Sigmoid colon (tissue), 7 donors: ENCODE measurements at regions of chr7 and their contacts with region 1.

Region 1: DNA sequence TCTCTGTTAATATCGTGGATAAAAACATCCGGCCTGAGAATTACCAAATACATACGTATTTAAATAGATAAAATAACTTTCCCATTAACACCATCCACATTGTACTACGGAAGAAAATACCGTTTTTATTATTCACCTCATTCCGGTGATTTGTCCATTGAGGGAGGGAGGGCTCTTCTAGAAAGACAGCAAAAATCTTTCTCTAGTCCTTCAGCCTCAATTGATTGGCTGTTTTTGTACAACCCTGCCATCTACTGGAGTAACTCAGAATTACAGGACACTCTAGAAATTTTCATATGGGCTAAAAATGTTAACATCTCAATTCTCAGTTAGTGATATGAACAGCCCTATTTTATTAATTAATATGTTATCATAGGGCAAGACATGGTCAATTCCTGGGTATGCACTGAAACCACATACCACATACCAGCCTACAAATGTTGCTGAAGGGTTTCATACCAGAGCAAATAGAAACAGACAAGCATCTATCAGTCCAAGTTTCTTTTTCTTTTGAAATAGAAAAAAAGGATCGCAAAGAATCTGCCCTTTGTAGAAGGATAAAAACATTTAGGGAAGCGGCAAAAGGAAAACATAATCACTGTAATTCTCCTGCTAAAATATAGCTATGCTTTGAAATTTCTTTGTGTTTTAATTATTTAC is 55.8 kb upstream of the CDCA7L start:
- DNase-seq: no peak
- H3K4me3 ChIP-seq: no peak overlapping the region
- H3K27ac ChIP-seq: peak overlapping the region in 1 of 4 donors; percentile 5
- H3K4me1 ChIP-seq: peaks cover 0 to 9% (median 0%) of the 10 kb centered on the region in 4 donors
- H3K27me3 ChIP-seq: no peaks in the 10 kb centered on the region
- CTCF ChIP-seq: peak; percentile 42 to 81 (median 76)
- EP300 ChIP-seq: no peak
- POLR2A ChIP-seq: no peak

Region 2: GRCh38 chr7:21507626-21508343 is 493.7 kb before region 1 on chr7:
- intact Hi-C with region 1: loop called (anchors 10 kb)
- DNase-seq: peak; percentile 57
- H3K4me3 ChIP-seq: no peak overlapping the region
- H3K27ac ChIP-seq: no peak overlapping the region
- H3K4me1 ChIP-seq: no peaks in the 10 kb centered on the region
- H3K27me3 ChIP-seq: no peaks in the 10 kb centered on the region
- CTCF ChIP-seq: peak; percentile 48 to 76 (median 66)
- EP300 ChIP-seq: no peak
- POLR2A ChIP-seq: no peak

Region 3: DNA sequence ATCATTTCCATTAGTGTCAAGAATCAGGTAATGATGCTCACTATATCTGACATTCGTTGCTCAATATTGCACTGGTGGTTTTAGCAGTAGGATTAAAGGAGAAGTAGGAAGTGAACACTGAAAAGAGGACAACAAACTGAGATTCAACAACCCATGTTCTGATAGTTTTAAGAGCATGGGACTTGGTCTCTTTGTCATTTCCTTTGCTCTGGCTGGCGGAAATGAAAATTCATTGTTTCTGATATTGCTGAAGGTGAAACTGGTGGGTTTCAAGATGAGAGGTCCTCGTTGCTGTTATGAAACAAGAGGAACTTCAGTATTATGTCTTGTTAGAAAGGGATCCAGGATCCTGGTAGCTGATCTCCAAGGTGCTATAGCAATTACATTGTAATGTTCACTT is 329.6 kb before region 1 on chr7:
- intact Hi-C with region 1: no loop called
- DNase-seq: no peak
- H3K4me3 ChIP-seq: no peak overlapping the region
- H3K27ac ChIP-seq: no peak overlapping the region
- H3K4me1 ChIP-seq: no peaks in the 10 kb centered on the region
- H3K27me3 ChIP-seq: no peaks in the 10 kb centered on the region
- CTCF ChIP-seq: no peak
- EP300 ChIP-seq: no peak
- POLR2A ChIP-seq: no peak

Region 4: GRCh38 chr7:21771906-21772610 is 229.4 kb before region 1 on chr7:
- intact Hi-C with region 1: loop called (anchors 10 kb)
- DNase-seq: no peak
- H3K4me3 ChIP-seq: peak overlapping the region in 1 of 4 donors; percentile 0
- H3K27ac ChIP-seq: peak overlapping the region in 3 of 4 donors; percentile 10 to 36 (median 16)
- H3K4me1 ChIP-seq: peaks cover 0 to 35% (median 29%) of the 10 kb centered on the region in 4 donors
- H3K27me3 ChIP-seq: no peaks in the 10 kb centered on the region
- CTCF ChIP-seq: no peak
- EP300 ChIP-seq: no peak
- POLR2A ChIP-seq: no peak

Region 5: DNA sequence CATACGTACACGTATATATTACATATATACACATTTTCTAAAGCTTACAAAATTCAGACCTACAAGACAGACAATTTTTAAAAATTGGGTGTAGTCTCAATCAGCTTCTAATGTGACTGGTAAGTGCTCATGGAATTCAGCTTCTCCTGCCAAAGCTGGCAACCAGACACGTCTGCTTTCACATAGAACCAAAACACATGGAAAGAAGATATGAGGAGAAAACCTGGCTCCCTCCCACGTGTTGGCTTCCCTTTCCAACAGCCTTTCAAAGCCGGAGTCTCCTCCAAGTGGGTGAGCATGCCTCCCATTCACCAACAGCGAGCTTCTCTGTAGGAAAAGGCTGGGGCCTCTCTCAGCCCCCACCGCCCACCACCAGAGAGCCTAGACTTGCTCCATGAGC is 89.2 kb before region 1 on chr7:
- intact Hi-C with region 1: loop called (anchors 10 kb)
- DNase-seq: no peak
- H3K4me3 ChIP-seq: no peak overlapping the region
- H3K27ac ChIP-seq: peak overlapping the region in 1 of 4 donors; percentile 37
- H3K4me1 ChIP-seq: peaks cover 0 to 32% (median 23%) of the 10 kb centered on the region in 4 donors
- H3K27me3 ChIP-seq: no peaks in the 10 kb centered on the region
- CTCF ChIP-seq: no peak
- EP300 ChIP-seq: no peak
- POLR2A ChIP-seq: no peak

Region 6: DNA sequence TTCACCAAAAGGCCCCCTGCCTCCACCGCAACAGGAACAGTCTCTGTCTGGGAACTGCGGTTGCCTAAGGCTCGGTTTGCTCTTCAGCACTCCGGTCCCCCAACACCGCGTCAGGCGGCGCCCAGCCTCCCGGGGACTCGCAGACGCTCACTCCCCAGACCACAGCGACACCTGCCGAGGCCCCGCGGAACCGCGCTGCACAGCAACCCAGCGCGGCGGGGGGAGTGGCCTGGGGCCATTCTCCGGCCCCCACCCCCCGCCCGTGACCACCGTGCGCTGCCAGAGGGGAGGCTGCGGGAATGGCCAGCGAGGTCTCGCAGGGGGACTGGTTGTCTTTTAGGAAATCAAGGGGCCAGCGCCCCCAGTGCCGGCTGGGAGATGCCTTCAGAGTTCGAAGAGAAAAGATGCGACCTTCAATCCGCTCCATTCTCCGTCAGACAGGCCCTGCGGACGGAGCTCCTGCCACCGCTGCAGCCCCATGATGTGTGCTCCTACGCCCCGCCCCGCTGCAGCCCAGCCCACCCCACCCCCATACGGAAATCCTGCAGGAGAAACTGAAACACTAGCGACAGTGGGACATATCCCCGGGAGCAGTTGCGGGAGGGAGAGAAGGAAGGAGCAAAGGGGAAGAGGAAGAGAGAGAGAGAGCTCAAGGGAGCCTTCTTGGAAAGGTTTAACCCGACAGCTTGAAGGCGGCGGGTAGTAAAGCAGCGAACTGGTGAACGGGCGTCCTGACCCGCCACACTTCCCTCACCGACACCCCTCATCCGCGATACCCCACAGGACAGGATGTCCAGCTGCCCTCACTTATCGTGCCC is 81.6 kb after region 1 on chr7:
- intact Hi-C with region 1: loop called (anchors 5 kb)
- DNase-seq: peak; percentile 94
- H3K4me3 ChIP-seq: peak overlapping the region; percentile 52 to 73 (median 60)
- H3K27ac ChIP-seq: peak overlapping the region; percentile 79 to 88 (median 84)
- H3K4me1 ChIP-seq: peaks cover 0 to 14% (median 6%) of the 10 kb centered on the region in 4 donors
- H3K27me3 ChIP-seq: peaks cover 0 to 13% (median 0%) of the 10 kb centered on the region in 3 donors
- CTCF ChIP-seq: peak; percentile 81 to 96 (median 90)
- EP300 ChIP-seq: peak in 1 of 4 donors; percentile 35
- POLR2A ChIP-seq: no peak